Activated T-helper 1 cell treated with anti-CD3 and anti-CD28 coated beads, Interleukin-12 subunit alpha, Interleukin-12 subunit beta, Interleukin-2, Interleukin-4 antibody, amounts not matched to agents 30 ng/mL and 10 ng/mL and 1 ng/mL, durations not matched to agents 14 hours and 24 hours and 36 hours (primary cell): ENCODE measurements at regions of chr5 and their contacts with region 1.

Region 1: DNA sequence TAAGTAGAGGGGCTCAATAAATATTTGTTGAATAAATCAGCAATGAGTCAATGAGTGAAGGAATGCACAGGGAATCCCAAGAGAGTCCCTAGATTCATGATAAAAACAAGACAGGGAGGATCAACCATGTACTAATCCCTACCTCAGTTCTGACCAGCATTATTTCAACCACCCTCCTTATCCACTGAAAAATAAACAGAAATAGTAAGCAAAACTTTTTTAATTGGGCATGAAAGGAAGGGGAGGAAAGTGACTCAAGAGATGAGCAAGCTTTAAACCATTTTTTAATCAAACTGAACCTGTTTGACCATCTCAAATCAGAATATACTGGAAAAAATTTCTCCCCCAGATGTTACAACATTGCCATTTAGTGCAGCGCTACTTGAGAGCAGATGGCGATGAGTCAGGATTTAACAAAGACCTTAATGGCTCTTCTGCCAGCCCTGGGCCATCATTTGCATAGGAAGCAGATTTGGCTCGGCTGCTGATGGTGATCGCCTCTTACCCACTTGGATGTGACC is 194.8 kb upstream of the SLC30A5 start:
- DNase-seq: no peak
- H3K4me3 Mint-ChIP-seq: no peak overlapping the region
- H3K27ac Mint-ChIP-seq: no peak overlapping the region
- H3K4me1 Mint-ChIP-seq: peaks cover 10% of the 10 kb centered on the region
- H3K27me3 Mint-ChIP-seq: no peaks in the 10 kb centered on the region

Region 2: GRCh38 chr5:68652534-68652965 is 246.5 kb before region 1 on chr5:
- intact Hi-C with region 1: no loop called
- DNase-seq: no peak
- H3K4me3 Mint-ChIP-seq: no peak overlapping the region
- H3K27ac Mint-ChIP-seq: no peak overlapping the region
- H3K4me1 Mint-ChIP-seq: no peaks in the 10 kb centered on the region
- H3K27me3 Mint-ChIP-seq: peaks cover 7% of the 10 kb centered on the region

Region 3: DNA sequence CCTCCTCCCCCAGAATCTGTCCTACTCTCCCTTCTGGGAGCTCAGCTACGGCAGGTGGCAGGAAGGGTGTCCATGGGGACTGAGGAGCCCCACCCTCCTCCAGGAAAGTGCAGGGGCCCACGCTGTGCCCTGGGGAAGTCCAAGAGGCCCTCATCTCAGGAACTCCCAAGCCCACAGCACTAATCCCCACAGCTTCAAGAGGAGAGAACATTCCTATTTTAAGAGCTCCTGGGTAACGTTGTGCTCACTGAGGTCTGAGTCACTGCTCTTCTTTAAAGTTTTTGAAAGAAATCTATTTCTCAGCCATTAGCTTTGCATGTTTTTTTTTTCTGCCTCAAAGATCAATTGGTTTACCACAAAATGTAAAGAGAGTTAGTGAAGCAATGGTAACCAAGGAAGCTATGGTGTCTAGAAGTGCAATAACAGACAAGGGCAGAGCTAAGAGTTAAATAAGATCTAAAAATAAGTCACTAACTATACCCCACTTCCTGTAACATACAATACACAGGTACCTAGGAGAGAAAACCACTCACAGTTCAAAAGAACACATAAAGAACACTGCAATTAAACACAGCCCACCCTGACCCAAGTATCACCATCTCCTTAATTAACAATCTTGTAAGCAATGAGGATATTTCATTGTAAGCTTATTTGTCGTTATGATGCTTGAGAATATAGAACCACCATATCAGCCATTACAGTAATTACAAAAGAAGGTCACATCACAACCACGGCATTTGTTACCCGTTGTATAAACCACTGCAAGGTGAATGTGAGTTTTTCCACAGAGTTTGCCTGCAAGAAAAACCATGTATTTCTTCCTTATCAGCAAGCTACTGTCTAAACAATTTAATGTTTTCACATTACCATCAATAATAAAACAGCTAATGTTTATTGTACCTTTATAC is 187.5 kb before region 1 on chr5:
- intact Hi-C with region 1: loop called (anchors 10 kb)
- DNase-seq: no peak
- H3K4me3 Mint-ChIP-seq: peak overlapping the region; percentile 48
- H3K27ac Mint-ChIP-seq: peak overlapping the region; percentile 65
- H3K4me1 Mint-ChIP-seq: peaks cover 16% of the 10 kb centered on the region
- H3K27me3 Mint-ChIP-seq: peaks cover 3% of the 10 kb centered on the region

Region 4: DNA sequence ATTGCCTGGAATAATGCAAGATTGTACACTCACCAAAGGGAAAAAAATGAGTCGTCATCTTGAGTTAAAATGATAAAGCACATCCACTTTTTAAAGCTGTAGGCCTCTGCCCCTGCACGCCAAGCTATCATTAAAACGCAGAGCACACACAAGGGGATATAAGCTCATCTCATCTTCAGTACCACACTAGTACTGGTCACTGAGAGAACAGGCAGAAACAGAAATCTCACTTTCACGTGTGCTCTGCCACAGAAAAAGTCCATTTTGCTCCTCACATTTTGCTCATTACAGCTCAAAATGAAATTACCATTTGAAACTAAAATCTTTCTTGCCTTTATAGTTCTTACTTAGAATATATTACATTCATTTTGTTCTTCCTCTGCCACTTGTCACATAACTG is 95.6 kb after region 1 on chr5:
- intact Hi-C with region 1: no loop called
- DNase-seq: no peak
- H3K4me3 Mint-ChIP-seq: no peak overlapping the region
- H3K27ac Mint-ChIP-seq: no peak overlapping the region
- H3K4me1 Mint-ChIP-seq: peaks cover 9% of the 10 kb centered on the region
- H3K27me3 Mint-ChIP-seq: peaks cover 9% of the 10 kb centered on the region